OCI-LY7 (cell line): ENCODE measurements at regions of chr3 and their contacts with region 1.

Region 1: GRCh38 chr3:42443819-42444436 is 33.5 kb upstream of the LYZL4 start:
- DNase-seq: peak; percentile 77
- H3K4me3 ChIP-seq: no peak overlapping the region
- H3K27ac ChIP-seq: no peak overlapping the region
- H3K4me1 ChIP-seq: no peaks in the 10 kb centered on the region
- CTCF ChIP-seq: peak; percentile 99

Region 2: DNA sequence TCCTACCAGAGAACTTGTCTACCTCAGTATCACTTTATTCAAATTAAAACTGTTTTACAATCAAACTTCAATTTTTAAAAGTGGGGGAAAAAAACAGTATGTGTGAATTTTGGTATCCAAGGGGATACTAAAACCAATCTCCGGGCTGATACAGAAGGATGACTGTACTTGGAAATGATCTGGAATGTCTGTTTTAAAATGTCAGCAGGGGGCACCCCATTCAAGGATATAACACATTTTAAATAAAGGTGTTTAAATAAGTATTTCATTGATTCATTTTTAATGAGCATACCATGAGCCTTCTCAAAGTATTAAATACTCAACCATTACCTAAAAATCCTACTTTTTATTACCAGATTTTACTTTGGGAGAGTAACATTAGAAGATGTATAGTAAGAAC is 550.0 kb before region 1 on chr3:
- CTCF ChIA-PET with region 1: no interaction called
- POLR2A ChIA-PET with region 1: no interaction called
- intact Hi-C with region 1: loop called (anchors 5 kb)
- DNase-seq: peak; percentile 38
- H3K4me3 ChIP-seq: no peak overlapping the region
- H3K27ac ChIP-seq: no peak overlapping the region
- H3K4me1 ChIP-seq: peaks cover 9% of the 10 kb centered on the region
- CTCF ChIP-seq: peak; percentile 88

Region 3: DNA sequence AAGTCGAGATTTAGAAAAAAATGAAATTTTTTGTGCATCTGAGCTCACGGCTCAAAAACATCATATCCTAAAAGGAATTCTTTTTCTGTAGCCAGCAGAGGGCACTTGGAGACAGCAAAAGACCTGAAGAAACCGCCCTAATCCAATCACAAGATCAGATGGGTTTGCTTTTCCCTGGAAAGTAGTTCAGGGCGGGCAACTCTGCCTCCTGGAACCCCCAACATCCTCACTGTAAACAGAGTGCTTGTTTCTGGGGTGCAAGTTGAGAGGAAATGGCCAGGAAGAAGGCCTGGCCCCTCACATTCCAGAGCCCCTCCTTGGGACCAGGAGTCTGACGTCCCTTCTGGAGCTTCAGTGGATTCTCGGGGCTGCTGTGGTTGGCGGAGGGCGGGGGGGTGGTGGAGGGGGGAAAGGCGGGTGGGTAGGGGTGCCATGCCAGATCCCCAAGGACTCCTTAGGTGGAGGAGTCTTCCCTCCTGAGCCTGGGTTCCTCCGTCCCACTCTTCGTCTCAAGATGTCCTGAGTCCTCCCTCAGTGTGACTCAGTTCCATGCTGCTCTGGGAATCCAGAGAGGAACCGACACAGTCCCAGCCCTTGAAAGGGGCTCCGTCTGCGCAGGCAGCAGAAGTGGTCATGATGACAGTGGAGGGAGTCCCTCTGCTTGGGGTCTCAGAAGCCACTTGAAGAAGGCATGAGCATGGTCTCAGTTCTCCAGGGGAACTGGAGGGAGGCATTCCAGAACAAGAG is 213.8 kb before region 1 on chr3:
- CTCF ChIA-PET with region 1: no interaction called
- POLR2A ChIA-PET with region 1: no interaction called
- intact Hi-C with region 1: loop called (anchors 5 kb)
- DNase-seq: peak; percentile 40
- H3K4me3 ChIP-seq: no peak overlapping the region
- H3K27ac ChIP-seq: no peak overlapping the region
- H3K4me1 ChIP-seq: peaks cover 3% of the 10 kb centered on the region
- CTCF ChIP-seq: peak; percentile 71

Region 4: DNA sequence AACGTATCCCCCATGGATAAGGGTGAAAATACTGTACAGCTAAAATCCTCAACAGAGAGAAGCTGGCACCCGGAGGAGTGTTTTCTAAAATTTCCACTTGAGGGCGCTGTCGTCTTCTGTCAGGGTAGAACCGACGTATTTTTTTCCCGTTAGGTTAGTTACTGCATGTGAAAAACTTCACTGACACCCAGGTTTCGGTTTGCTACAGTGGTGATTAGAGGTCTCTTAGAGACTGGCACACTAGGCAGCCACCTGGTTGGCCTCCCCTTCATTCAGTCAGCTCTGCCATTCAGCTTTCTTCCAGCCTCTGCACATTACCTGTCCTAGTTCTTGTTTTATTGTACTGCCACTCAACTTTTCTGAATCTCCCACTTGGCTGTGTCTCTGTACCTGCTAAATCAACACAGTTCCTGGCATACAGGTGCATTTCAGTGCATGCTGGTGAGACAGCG is 196.3 kb before region 1 on chr3:
- CTCF ChIA-PET with region 1: interaction called, 4 read pairs
- POLR2A ChIA-PET with region 1: no interaction called
- intact Hi-C with region 1: loop called (anchors 1 kb)
- DNase-seq: peak; percentile 76
- H3K4me3 ChIP-seq: no peak overlapping the region
- H3K27ac ChIP-seq: no peak overlapping the region
- H3K4me1 ChIP-seq: no peaks in the 10 kb centered on the region
- CTCF ChIP-seq: peak; percentile 91

Region 5: DNA sequence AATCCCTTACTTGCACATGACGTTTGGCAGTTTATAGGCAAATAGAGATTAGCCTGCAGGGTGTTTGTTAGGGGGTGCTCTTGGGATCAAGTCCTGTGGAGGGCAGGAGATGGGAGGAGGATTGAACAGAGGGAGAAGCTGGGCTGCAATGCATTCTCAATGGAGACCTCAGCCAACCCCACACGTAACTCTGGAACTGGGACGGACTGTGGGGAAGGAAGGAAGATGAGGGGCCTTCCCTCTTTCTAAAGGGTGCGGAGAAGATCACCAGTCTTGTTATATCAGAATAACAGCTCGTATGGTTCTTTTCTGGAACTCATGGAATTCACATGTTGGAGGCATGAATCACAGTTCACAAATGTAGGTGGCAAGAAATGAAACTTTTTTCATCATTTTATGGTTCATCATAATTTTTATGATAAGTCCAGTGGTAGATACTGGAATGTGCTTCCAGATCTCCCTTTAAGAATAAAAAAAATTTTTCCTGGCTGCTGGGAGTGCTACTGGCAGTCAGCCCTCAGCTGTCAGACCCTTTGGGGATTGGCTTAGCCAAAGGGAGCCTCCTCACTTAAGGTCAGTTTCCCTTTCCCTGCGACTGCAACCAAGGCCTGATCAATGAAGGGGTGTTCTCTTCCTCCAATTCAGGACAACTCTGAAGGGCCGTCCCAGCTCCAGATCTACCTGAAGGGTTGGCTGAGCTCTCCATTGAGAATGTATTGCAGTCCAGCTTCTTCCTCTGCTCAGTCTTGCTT is 13.0 kb before region 1 on chr3:
- CTCF ChIA-PET with region 1: no interaction called
- POLR2A ChIA-PET with region 1: no interaction called
- intact Hi-C with region 1: no loop called
- DNase-seq: no peak
- H3K4me3 ChIP-seq: no peak overlapping the region
- H3K27ac ChIP-seq: no peak overlapping the region
- H3K4me1 ChIP-seq: no peaks in the 10 kb centered on the region
- CTCF ChIP-seq: no peak